CD8-positive, alpha-beta T cell (primary cell): ENCODE measurements at regions of chr10 and their contacts with region 1.

Region 1: DNA sequence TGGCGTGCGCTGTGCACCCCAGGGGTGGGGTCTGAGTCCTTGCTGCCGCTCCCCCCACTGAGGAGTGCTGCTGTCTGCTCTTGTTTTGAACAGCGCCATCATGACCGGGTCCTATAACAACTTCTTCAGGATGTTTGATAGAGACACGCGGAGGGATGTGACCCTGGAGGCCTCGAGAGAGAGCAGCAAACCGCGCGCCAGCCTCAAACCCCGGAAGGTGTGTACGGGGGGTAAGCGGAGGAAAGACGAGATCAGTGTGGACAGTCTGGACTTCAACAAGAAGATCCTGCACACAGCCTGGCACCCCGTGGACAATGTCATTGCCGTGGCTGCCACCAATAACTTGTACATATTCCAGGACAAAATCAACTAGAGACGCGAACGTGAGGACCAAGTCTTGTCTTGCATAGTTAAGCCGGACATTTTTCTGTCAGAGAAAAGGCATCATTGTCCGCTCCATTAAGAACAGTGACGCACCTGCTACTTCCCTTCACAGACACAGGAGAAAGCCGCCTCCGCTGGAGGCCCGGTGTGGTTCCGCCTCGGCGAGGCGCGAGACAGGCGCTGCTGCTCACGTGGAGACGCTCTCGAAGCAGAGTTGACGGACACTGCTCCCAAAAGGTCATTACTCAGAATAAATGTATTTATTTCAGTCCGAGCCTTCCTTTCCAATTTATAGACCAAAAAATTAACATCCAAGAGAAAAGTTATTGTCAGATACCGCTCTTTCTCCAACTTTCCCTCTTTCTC is 26.0 kb downstream of the BNIP3 start:
- DNase-seq: no peak
- ATAC-seq: no peak
- H3K4me3 ChIP-seq: no peak overlapping the region
- H3K4me3 Mint-ChIP-seq: no peak overlapping the region
- H3K27ac ChIP-seq: no peak overlapping the region
- H3K27ac Mint-ChIP-seq: peak overlapping the region; percentile 55
- H3K4me1 ChIP-seq: no peaks in the 10 kb centered on the region
- H3K4me1 Mint-ChIP-seq: peaks cover 3% of the 10 kb centered on the region
- H3K27me3 ChIP-seq: no peaks in the 10 kb centered on the region
- H3K27me3 Mint-ChIP-seq: no peaks in the 10 kb centered on the region
- CTCF ChIP-seq: no peak

Region 2: DNA sequence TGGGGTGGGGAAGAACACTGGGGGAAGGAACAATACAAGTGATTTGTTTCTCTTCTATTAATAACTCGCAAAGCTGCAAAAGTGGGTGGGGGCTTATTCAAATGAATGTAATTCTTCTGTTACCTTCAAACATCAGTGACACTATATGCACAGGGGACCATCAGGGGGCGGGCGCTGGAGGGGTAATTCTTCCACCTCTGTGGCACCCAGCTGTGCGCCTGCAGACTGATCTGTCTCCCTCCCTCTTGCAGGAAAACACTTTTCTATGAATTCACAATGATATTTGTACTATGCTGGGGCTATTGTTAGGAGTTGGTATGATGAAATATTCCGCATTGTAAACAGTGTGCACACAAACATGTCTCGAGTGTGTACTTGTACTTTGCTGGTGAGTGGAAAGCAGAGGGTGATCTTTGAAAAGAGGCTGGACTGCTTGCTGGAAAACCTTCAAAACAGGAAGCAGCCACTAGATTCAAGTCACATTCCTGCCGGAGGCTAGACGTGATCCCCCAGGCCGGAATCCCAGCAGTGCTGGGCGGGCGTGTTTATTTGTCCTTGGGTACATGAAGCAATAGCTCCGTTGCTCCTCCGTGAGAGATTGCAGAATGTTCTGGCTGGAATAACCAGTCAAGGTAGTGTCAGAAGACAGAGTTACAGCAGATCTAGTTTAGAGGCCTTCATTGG is 41.7 kb after region 1 on chr10:
- CTCF ChIA-PET with region 1: no interaction called
- POLR2A ChIA-PET with region 1: no interaction called
- intact Hi-C with region 1: loop called in 1 of 2 experiments (anchors 5 kb)
- DNase-seq: no peak
- ATAC-seq: no peak
- H3K4me3 ChIP-seq: no peak overlapping the region
- H3K4me3 Mint-ChIP-seq: no peak overlapping the region
- H3K27ac ChIP-seq: no peak overlapping the region
- H3K27ac Mint-ChIP-seq: no peak overlapping the region
- H3K4me1 ChIP-seq: no peaks in the 10 kb centered on the region
- H3K4me1 Mint-ChIP-seq: no peaks in the 10 kb centered on the region
- H3K27me3 ChIP-seq: no peaks in the 10 kb centered on the region
- H3K27me3 Mint-ChIP-seq: no peaks in the 10 kb centered on the region
- CTCF ChIP-seq: no peak

Region 3: GRCh38 chr10:132865171-132865631 is 909.4 kb after region 1 on chr10:
- CTCF ChIA-PET with region 1: no interaction called
- POLR2A ChIA-PET with region 1: no interaction called
- intact Hi-C with region 1: no loop called
- DNase-seq: no peak
- ATAC-seq: no peak
- H3K4me3 ChIP-seq: no peak overlapping the region
- H3K4me3 Mint-ChIP-seq: no peak overlapping the region
- H3K27ac ChIP-seq: no peak overlapping the region
- H3K27ac Mint-ChIP-seq: no peak overlapping the region
- H3K4me1 ChIP-seq: peaks cover 3% of the 10 kb centered on the region
- H3K4me1 Mint-ChIP-seq: peaks cover 9% of the 10 kb centered on the region
- H3K27me3 ChIP-seq: no peaks in the 10 kb centered on the region
- H3K27me3 Mint-ChIP-seq: peaks cover 20% of the 10 kb centered on the region
- CTCF ChIP-seq: no peak